ENCODE measurements at regions of chr1 and their contacts with region 1.

Region 1: DNA sequence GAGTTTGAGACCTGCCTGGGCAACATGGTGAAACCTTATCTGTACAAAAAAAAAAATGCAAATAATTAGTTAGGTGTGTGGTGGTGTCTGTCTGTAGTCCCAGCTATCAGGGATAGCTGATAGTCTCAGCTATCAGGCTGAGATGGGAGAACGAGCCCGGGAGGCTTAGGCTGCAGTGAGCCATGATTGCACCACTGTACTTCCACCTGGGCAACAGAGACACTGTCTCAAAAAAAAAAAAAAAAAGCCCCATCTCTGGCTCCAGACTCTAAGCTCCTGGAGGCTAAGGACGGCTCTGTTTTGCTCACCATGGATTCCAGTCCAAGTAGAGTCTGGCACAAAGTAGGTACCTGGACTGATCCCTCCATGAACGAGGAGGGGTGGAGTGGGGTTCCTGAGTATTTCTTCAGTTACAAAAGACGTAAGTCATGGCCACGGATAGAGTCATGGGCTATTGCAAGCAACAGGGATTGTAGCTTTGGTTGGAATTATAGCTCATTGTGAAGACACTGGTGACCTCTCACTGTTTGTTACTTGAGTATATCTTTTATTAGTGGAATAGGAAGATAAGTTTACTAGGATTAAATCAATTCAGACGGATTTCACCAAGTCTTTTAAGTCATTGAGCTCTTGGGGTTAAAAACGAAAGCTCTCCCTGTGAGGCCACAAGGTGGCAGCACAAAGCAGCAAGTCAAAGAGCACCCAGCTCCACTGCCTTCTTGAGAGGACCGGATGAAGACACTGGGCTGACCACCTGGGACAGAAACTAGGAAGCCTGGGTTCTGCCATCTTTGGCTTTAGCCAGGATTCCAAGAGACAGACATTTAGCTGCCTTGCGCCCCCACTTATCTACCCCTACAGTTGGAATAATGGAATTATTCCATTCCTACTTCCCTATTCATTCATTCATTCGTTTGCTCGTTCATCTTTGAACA is 35.6 kb upstream of the TMEM61 start:
- DNase-seq: peak; percentile 80
- CTCF ChIP-seq: peak; percentile 78

Region 2: GRCh38 chr1:54934869-54935268 is 10.0 kb before region 1 on chr1:
- CTCF ChIA-PET with region 1: interaction called, 49 read pairs
- POLR2A ChIA-PET with region 1: no interaction called
- DNase-seq: no peak
- CTCF ChIP-seq: no peak

Region 3: GRCh38 chr1:54965624-54966340 is 20.9 kb after region 1 on chr1:
- CTCF ChIA-PET with region 1: interaction called, 25 read pairs
- POLR2A ChIA-PET with region 1: no interaction called
- DNase-seq: peak; percentile 40
- CTCF ChIP-seq: no peak

Region 4: GRCh38 chr1:54996359-54996868 is 51.5 kb after region 1 on chr1:
- CTCF ChIA-PET with region 1: interaction called, 609 read pairs
- POLR2A ChIA-PET with region 1: interaction called, 6 read pairs
- DNase-seq: peak; percentile 92
- CTCF ChIP-seq: peak; percentile 88

Region 5: DNA sequence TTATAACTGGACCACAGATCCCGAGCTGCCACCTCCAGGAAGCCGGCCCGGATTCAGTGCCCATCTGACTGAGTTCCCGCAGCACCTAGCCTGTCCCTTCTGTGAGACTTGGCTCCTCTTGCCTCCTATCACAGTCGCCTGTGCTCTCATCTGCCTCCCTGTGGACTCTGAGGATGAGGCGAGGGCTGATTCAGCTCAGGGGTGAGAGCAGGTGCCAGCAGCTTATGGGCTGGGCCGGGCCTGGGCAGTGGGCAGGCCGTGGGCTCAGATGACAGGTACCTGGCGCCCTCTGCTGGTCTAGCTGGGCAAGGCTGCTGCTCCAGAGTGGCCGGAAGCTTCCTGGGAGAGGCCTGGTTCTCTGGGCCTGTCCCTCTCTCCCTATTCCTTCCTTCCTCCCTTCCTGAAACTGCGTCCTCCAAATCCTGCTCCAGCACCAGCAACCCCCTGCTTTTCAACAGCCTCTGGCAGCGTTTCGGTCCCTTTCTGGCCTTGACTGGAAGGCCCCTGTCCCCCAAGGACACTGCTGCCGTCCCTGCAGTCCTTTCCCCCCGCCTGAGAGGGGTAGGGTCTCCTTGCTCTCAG is 77.2 kb after region 1 on chr1:
- CTCF ChIA-PET with region 1: interaction called, 123 read pairs
- POLR2A ChIA-PET with region 1: no interaction called
- DNase-seq: peak; percentile 85
- CTCF ChIP-seq: peak; percentile 91

Measured in GM10248 (cell line).